OCI-LY7 (cell line): ENCODE measurements at regions of chr14 and their contacts with region 1.

Region 1: DNA sequence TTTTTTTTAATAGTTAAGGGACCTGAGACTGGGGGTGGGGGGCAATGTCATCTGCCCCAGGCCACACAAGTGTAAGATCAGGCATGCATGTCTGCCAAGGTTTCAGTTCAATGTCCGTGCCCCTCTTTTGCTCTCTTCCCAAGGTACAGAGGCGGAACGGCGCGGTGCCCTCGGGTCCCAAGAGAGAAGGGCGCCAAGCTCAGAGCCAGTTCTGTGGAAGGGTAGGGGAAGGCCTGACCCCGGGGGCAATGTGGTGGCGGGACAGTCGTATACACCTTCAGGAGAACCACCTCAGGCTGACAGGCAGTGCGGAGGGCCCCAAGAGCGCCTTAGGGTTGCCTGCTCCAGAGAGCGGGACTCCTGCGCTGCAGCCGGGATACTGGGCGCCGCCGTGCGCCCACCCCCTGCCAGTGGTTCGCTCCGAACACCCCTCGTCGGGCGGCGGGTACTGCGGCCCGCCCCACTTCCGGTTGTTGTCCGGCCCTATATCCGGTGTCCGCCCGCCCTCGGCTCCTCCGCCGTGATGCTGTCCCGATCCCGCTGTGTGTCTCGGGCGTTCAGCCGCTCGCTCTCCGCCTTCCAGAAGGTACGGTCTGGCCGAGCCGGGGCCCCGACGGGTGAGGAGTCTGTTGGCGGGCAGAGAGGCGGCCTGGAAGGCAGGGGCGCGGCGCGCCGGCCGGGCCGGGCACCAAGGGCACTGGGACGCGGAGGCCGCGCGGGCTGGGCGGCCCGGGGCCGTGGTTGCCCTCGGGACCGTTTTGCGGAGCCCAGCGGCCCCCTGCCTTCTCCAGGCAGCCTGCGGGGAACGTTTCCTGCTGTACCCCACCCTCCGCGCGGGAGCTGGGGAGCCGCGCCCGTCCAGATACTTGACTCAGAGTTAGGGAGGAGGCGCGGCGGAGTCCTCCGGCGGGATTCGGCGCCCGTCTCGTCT is at the start of gene DLST:
- DNase-seq: peak; percentile 92
- H3K4me3 ChIP-seq: peak within 1 kb of the TSS; percentile 94
- H3K27ac ChIP-seq: peak within 1 kb of the TSS; percentile 72
- H3K4me1 ChIP-seq: peaks cover 44% of the 10 kb centered on the region
- CTCF ChIP-seq: no peak
- total RNA-seq, gene DLST: 70.2 and 74.4 TPM in 2 replicates

Region 2: GRCh38 chr14:74630881-74631690 is 250.6 kb before region 1 on chr14:
- CTCF ChIA-PET with region 1: no interaction called
- POLR2A ChIA-PET with region 1: no interaction called
- intact Hi-C with region 1: no loop called
- DNase-seq: no peak
- H3K4me3 ChIP-seq: no peak overlapping the region
- H3K27ac ChIP-seq: no peak overlapping the region
- H3K4me1 ChIP-seq: no peaks in the 10 kb centered on the region
- CTCF ChIP-seq: no peak

Region 3: GRCh38 chr14:74824997-74825396 is 56.7 kb before region 1 on chr14:
- CTCF ChIA-PET with region 1: no interaction called
- POLR2A ChIA-PET with region 1: no interaction called
- intact Hi-C with region 1: no loop called
- DNase-seq: peak; percentile 21
- H3K4me3 ChIP-seq: no peak overlapping the region
- H3K27ac ChIP-seq: no peak overlapping the region
- H3K4me1 ChIP-seq: peaks cover 7% of the 10 kb centered on the region
- CTCF ChIP-seq: no peak

Region 4: DNA sequence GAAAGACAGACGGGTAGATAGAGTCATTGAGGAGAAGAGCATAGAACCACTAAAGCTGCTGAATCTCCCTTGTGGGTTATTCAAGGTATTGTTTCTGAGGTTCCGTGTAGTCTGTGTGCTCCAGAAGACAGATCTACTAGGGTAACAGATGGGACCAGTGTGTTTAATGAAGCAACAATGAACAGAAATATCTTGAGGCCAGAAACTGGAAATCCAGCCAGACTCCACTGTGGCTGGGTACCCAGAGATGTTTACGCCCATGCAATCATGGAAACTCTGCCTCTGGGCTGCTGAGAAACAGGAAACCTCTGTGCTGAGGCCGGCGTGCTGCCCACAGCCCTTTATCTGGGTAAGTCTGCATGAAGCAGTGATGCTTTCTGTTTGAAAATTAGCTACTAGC is 14.0 kb before region 1 on chr14:
- CTCF ChIA-PET with region 1: no interaction called
- POLR2A ChIA-PET with region 1: interaction called, 11 read pairs
- intact Hi-C with region 1: no loop called
- DNase-seq: no peak
- H3K4me3 ChIP-seq: no peak overlapping the region
- H3K27ac ChIP-seq: no peak overlapping the region
- H3K4me1 ChIP-seq: no peaks in the 10 kb centered on the region
- CTCF ChIP-seq: no peak

Region 5: GRCh38 chr14:74897642-74898041 is 15.9 kb after region 1 on chr14:
- CTCF ChIA-PET with region 1: interaction called, 16 read pairs
- POLR2A ChIA-PET with region 1: interaction called, 5 read pairs
- intact Hi-C with region 1: no loop called
- DNase-seq: no peak
- H3K4me3 ChIP-seq: no peak overlapping the region
- H3K27ac ChIP-seq: no peak overlapping the region
- H3K4me1 ChIP-seq: peaks cover 14% of the 10 kb centered on the region
- CTCF ChIP-seq: no peak